ENCODE measurements at regions of chr4 and their contacts with region 1.

Region 1: GRCh38 chr4:173013232-173013930 is 155.2 kb upstream of the GALNT7 start:
- DNase-seq: peak; percentile 58
- H3K4me3 Mint-ChIP-seq: no peak overlapping the region
- H3K27ac Mint-ChIP-seq: no peak overlapping the region
- H3K4me1 Mint-ChIP-seq: no peaks in the 10 kb centered on the region
- H3K27me3 Mint-ChIP-seq: no peaks in the 10 kb centered on the region

Region 2: DNA sequence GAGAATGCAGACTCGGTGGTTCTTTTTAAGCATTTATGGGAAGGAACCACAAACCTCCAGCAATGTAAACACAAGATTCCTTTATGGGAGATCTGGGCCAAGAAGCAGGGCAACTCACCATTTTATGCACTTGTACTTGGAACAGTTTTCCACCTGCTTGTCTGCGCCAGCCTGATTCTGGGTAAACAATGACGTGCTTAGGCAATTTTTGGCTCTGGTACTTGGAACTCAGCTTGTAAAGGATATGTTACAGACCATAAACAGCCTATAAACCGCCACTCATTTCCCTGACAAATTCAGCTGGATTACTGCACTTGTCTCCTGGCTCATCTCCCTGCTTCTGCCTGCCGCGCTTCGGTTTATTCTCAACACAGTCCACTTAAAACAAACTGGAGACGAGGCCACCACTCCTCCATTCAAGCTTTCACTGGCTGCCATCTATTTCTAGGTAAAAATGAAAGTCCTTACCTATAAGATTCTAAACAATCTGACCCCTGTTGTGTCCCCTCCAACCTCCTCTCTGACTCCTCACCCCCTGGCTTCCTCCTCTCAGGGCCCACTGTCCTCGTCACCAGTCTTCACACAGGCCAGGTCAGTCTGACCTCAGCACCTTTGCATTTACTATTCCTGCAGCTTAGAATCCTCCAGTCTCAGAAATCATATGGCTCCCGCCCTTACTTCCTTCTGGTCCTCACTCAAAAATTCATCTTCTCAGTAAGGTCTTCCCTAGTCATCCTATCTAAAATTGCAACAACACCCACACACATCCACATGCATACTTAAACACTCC is 50.6 kb before region 1 on chr4:
- CTCF ChIA-PET with region 1: no interaction called
- POLR2A ChIA-PET with region 1: no interaction called
- intact Hi-C with region 1: no loop called
- DNase-seq: no peak
- H3K4me3 Mint-ChIP-seq: no peak overlapping the region
- H3K27ac Mint-ChIP-seq: no peak overlapping the region
- H3K4me1 Mint-ChIP-seq: no peaks in the 10 kb centered on the region
- H3K27me3 Mint-ChIP-seq: peaks cover 18% of the 10 kb centered on the region

Region 3: DNA sequence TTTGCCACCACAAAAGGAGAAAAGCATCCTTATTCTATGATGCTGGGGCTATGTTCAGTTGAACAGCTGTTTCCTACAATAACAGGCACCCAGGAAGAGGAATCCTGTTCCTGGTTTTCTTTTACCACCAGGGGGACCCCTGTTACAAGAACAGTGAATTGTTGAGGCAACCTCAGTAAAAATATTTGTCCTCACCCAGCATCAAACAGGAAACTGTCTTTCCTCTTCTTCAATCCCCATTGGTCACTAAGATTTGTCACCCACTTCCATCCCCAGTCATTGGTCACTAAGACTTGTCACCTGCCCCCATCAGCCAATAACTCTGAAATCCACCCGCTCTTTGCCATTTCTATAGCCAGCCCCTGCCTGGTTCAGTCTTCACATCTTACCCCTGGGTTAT is 11.8 kb after region 1 on chr4:
- CTCF ChIA-PET with region 1: interaction called, 28 read pairs
- POLR2A ChIA-PET with region 1: no interaction called
- intact Hi-C with region 1: no loop called
- DNase-seq: no peak
- H3K4me3 Mint-ChIP-seq: no peak overlapping the region
- H3K27ac Mint-ChIP-seq: no peak overlapping the region
- H3K4me1 Mint-ChIP-seq: no peaks in the 10 kb centered on the region
- H3K27me3 Mint-ChIP-seq: no peaks in the 10 kb centered on the region

Region 4: GRCh38 chr4:173257732-173258717 is 244.6 kb after region 1 on chr4:
- CTCF ChIA-PET with region 1: interaction called, 83 read pairs
- POLR2A ChIA-PET with region 1: no interaction called
- intact Hi-C with region 1: loop called (anchors 1 kb)
- DNase-seq: peak; percentile 73
- H3K4me3 Mint-ChIP-seq: no peak overlapping the region
- H3K27ac Mint-ChIP-seq: no peak overlapping the region
- H3K4me1 Mint-ChIP-seq: peaks cover 4% of the 10 kb centered on the region
- H3K27me3 Mint-ChIP-seq: no peaks in the 10 kb centered on the region

Region 5: GRCh38 chr4:173301518-173302201 is 288.3 kb after region 1 on chr4:
- CTCF ChIA-PET with region 1: interaction called, 101 read pairs
- POLR2A ChIA-PET with region 1: no interaction called
- intact Hi-C with region 1: loop called (anchors 1 kb)
- DNase-seq: no peak
- H3K4me3 Mint-ChIP-seq: no peak overlapping the region
- H3K27ac Mint-ChIP-seq: no peak overlapping the region
- H3K4me1 Mint-ChIP-seq: peaks cover 3% of the 10 kb centered on the region
- H3K27me3 Mint-ChIP-seq: no peaks in the 10 kb centered on the region

Region 6: DNA sequence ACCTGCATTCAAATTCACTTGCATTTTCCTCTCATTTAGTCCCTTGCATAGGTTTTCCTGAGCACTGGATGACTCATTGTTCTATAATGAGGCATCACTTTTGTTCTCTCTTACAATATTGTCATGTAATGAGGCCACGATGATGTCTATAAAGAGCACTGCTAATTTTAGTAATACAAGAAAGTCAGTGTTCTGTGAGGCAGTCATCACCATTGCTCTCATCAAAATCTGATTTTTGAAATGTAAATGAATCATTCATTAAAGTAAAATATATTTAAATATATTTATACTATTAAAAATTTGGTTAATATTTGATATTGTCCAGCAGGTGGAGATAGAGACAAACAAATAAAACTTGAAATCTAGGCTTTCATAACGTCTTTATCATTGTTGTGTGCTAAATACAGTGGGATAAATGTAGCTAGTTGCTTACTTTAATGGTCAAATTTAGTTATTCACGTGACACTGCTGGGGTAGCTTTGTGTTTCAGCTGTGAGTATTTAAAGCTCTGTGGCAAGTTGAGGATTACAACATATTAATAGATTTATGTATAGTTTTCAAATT is 305.3 kb after region 1 on chr4:
- CTCF ChIA-PET with region 1: interaction called, 10 read pairs
- POLR2A ChIA-PET with region 1: no interaction called
- intact Hi-C with region 1: loop called (anchors 5 kb)
- DNase-seq: no peak
- H3K4me3 Mint-ChIP-seq: no peak overlapping the region
- H3K27ac Mint-ChIP-seq: no peak overlapping the region
- H3K4me1 Mint-ChIP-seq: peaks cover 12% of the 10 kb centered on the region
- H3K27me3 Mint-ChIP-seq: no peaks in the 10 kb centered on the region

Region 7: GRCh38 chr4:173398779-173399415 is 385.5 kb after region 1 on chr4 and contains the start of gene SCRG1:
- CTCF ChIA-PET with region 1: no interaction called
- POLR2A ChIA-PET with region 1: no interaction called
- intact Hi-C with region 1: no loop called
- DNase-seq: no peak
- H3K4me3 Mint-ChIP-seq: no peak within 1 kb of the TSS
- H3K27ac Mint-ChIP-seq: no peak within 1 kb of the TSS
- H3K4me1 Mint-ChIP-seq: no peaks in the 10 kb centered on the region
- H3K27me3 Mint-ChIP-seq: no peaks in the 10 kb centered on the region
- total RNA-seq, gene SCRG1: not detected

Region 8: GRCh38 chr4:173494013-173494970 is 480.9 kb after region 1 on chr4:
- CTCF ChIA-PET with region 1: interaction called, 6 read pairs
- POLR2A ChIA-PET with region 1: no interaction called
- intact Hi-C with region 1: loop called (anchors 1 kb)
- DNase-seq: peak; percentile 72
- H3K4me3 Mint-ChIP-seq: peak overlapping the region; percentile 77
- H3K27ac Mint-ChIP-seq: no peak overlapping the region
- H3K4me1 Mint-ChIP-seq: peaks cover 14% of the 10 kb centered on the region
- H3K27me3 Mint-ChIP-seq: peaks cover 21% of the 10 kb centered on the region